Heart right ventricle (tissue), 16 donors: ENCODE measurements at regions of chr2 and their contacts with region 1.

Region 1: GRCh38 chr2:55431982-55432627 is 12.4 kb upstream of the CCDC88A start:
- DNase-seq: no peak
- ATAC-seq: peak in 3 of 8 donors; percentile 35 to 50 (median 47)
- H3K4me3 ChIP-seq: no peak overlapping the region
- H3K27ac ChIP-seq: no peak overlapping the region
- H3K4me1 ChIP-seq: peaks cover 0 to 4% (median 0%) of the 10 kb centered on the region in 9 donors
- H3K27me3 ChIP-seq: no peaks in the 10 kb centered on the region
- CTCF ChIP-seq: peak; percentile 8 to 72 (median 64)

Region 2: DNA sequence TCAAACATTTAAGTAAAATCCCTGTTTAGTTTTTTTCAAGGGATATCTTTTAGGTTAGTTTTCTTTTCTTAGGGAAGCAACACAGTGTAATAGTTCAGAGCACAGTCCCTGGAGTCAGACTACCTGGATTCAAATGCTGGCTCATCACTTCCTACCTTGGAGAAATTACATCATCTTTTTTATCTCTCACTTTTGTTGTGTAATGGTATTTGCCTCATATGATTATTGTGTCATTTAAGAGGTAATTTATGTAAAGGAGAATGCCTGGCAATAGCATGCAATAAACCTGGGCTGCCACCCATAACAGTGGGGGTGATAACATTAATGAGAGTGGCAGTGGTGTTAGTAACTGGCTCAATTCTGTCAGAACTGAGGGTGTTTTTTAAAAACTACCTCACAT is 1619.0 kb before region 1 on chr2:
- intact Hi-C with region 1: no loop called
- DNase-seq: no peak
- ATAC-seq: peak in 2 of 8 donors; percentile 29 to 31
- H3K4me3 ChIP-seq: no peak overlapping the region
- H3K27ac ChIP-seq: peak overlapping the region in 5 of 10 donors; percentile 8 to 52 (median 29)
- H3K4me1 ChIP-seq: peaks cover 0 to 15% (median 4%) of the 10 kb centered on the region in 9 donors
- H3K27me3 ChIP-seq: no peaks in the 10 kb centered on the region
- CTCF ChIP-seq: no peak

Region 3: DNA sequence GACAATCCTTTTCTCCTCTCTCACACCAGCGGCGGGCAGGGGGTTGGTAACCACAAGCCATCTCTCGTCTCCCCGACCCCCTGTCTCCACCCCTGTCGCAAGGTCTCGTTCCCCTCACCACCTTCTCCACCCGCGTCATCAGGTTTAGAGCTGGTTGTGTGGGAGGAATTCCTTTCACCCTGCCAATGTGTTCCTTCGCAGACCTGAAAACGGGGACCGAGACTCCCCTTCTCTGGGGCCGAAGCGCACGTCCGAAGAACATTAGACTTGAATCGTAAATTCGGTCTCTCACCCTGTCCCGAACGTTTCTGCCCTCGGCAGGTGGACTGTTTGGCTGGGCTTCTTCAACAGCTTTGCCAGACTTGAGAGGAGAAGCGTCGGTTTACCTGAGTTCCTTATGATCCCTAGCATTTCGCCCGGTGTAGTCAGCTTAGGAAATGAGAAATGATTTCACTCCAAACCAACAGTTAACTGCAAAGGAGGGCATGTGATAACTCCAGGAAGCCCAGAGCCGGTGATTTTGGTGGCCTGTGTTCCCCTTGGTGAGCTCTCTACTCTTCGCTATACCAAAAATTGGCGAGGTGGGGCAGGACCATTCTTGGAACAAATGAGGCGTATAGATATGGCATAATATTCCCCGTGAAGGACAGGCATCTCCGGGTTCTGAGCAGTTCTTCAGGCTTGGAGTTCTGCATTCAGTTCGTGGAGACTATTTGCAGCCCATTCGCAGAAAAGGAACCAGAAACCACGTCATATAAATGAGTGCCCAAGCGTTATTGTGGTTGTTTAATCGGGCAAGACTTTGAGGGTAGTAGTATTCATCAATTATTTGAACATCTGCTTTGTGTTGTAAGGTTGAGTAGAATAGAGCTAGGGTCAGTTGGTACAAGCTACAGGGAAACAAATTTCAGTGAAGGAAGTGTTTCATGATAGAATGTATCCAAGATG is 88.1 kb after region 1 on chr2:
- intact Hi-C with region 1: loop called in 1 of 10 experiments (anchors 5 kb)
- DNase-seq: peak in 1 of 2 donors; percentile 37
- ATAC-seq: peak in 7 of 8 donors; percentile 2 to 45 (median 31)
- H3K4me3 ChIP-seq: peak overlapping the region; percentile 42 to 95 (median 82)
- H3K27ac ChIP-seq: peak overlapping the region; percentile 17 to 94 (median 84)
- H3K4me1 ChIP-seq: peaks cover 0 to 22% (median 10%) of the 10 kb centered on the region in 9 donors
- H3K27me3 ChIP-seq: no peaks in the 10 kb centered on the region
- CTCF ChIP-seq: no peak